PC-3 (cell line): ENCODE measurements at regions of chr3 and their contacts with region 1.

Region 1: GRCh38 chr3:85161526-85161925 is 202.7 kb downstream of the CADM2 start:
- DNase-seq: peak; percentile 92
- ATAC-seq: peak; percentile 89
- H3K4me3 ChIP-seq: peak overlapping the region; percentile 31; the same call in 1 of the 2 replicates
- H3K27ac ChIP-seq: peak overlapping the region; percentile 91
- H3K4me1 ChIP-seq: peaks cover 34% of the 10 kb centered on the region
- H3K27me3 ChIP-seq: no peaks in the 10 kb centered on the region
- CTCF ChIP-seq: no peak

Region 2: DNA sequence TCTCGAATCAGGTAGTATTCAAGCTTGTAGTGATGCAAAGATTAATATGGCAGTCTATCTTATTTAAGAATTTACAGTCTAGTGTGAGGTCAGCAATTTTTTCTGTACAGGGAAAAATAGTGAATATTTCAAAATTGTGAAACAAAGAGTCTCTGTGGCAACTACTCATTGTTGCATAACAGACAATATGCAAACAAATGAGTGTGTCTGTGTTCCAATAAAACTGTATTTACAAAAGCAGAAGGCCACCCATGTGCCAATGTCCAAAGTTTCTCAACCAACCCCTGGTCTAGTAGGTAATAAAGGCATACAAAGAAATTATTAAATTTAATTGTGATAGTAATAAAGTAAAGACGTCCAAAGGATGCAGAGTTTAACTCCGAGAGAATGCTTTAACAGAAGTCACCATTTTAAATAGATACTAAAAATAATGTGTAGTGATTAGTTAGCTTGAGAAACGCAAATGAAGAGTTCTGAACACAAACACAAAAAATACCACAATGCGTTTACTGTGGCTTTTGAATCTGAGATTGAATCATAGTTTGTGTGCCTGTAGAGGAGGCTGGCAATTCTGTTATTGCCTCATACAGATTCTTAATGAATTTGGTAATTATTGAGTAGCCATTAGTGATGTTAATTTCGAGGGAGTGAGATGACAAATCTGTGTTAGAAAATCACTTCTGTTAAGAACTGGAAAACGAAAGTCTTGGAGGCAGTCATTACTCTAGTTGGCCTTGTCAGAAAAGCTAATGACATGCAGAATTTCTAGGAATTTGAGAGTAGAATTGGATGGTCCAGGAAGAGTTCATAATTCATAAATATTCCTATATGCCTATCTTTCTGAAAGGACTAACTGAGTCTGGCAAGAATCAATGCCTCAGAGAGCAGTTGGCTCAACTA is 154.1 kb before region 1 on chr3:
- CTCF ChIA-PET with region 1: no interaction called
- POLR2A ChIA-PET with region 1: no interaction called
- intact Hi-C with region 1: loop called (anchors 5 kb)
- DNase-seq: peak; percentile 58
- ATAC-seq: peak; percentile 90
- H3K4me3 ChIP-seq: no peak overlapping the region
- H3K27ac ChIP-seq: no peak overlapping the region
- H3K4me1 ChIP-seq: peaks cover 8% of the 10 kb centered on the region
- H3K27me3 ChIP-seq: no peaks in the 10 kb centered on the region
- CTCF ChIP-seq: no peak

Region 3: DNA sequence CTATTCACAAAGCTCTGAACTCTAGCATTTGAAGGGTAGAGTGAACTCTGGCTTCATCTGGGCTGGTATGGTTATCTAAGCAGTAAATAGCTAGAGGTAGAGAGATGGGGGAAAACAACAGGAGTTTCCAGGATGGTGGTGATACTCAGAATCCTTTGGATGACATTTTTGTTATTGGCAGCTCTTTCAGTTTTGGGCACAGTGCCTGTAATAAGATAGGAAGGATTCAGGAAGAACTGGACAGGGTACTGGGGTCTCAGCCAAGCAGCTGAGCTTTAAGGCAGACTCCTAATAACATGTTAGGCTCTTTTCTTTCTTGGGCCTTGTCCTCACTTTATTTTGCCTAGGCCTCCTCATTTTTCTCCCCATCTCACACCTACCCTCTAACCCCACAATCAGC is 135.8 kb after region 1 on chr3:
- CTCF ChIA-PET with region 1: no interaction called
- POLR2A ChIA-PET with region 1: no interaction called
- intact Hi-C with region 1: no loop called
- DNase-seq: no peak
- ATAC-seq: no peak
- H3K4me3 ChIP-seq: no peak overlapping the region
- H3K27ac ChIP-seq: no peak overlapping the region
- H3K4me1 ChIP-seq: no peaks in the 10 kb centered on the region
- H3K27me3 ChIP-seq: no peaks in the 10 kb centered on the region
- CTCF ChIP-seq: no peak

Region 4: DNA sequence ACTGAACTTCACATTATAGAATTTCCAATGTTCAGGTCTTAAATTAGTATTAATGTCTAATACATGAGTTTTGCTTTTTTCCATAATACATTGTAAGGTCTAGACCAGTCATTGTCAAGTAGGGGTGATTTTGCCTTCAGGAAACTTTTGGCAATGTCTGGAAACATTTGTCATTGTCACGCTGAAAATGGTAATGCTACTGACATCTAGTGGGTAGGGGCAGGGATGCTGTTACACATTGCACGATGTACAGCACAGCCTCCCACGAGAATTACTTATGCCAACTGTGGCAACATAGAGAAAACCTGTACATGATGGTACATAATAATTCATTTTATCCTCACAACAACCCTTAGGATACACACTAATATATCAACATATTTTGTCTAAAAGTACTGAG is 181.4 kb after region 1 on chr3:
- CTCF ChIA-PET with region 1: no interaction called
- POLR2A ChIA-PET with region 1: no interaction called
- intact Hi-C with region 1: loop called (anchors 5 kb)
- DNase-seq: peak; percentile 69
- ATAC-seq: peak; percentile 87
- H3K4me3 ChIP-seq: no peak overlapping the region
- H3K27ac ChIP-seq: no peak overlapping the region
- H3K4me1 ChIP-seq: peaks cover 13% of the 10 kb centered on the region
- H3K27me3 ChIP-seq: no peaks in the 10 kb centered on the region
- CTCF ChIP-seq: peak; percentile 87